SK-N-SH (cell line): ENCODE measurements at regions of chr2 and their contacts with region 1.

Region 1: GRCh38 chr2:127591221-127591923 is 54.6 kb upstream of the GPR17 start:
- DNase-seq: peak; percentile 82
- H3K4me3 ChIP-seq: no peak overlapping the region; a peak in 1 of 4 replicates
- H3K27ac ChIP-seq: no peak overlapping the region
- H3K4me1 ChIP-seq: no peaks in the 10 kb centered on the region
- H3K27me3 ChIP-seq: no peaks in the 10 kb centered on the region
- CTCF ChIP-seq: peak; percentile 74
- EP300 ChIP-seq: no peak
- RAD21 ChIP-seq: peak; percentile 89

Region 2: DNA sequence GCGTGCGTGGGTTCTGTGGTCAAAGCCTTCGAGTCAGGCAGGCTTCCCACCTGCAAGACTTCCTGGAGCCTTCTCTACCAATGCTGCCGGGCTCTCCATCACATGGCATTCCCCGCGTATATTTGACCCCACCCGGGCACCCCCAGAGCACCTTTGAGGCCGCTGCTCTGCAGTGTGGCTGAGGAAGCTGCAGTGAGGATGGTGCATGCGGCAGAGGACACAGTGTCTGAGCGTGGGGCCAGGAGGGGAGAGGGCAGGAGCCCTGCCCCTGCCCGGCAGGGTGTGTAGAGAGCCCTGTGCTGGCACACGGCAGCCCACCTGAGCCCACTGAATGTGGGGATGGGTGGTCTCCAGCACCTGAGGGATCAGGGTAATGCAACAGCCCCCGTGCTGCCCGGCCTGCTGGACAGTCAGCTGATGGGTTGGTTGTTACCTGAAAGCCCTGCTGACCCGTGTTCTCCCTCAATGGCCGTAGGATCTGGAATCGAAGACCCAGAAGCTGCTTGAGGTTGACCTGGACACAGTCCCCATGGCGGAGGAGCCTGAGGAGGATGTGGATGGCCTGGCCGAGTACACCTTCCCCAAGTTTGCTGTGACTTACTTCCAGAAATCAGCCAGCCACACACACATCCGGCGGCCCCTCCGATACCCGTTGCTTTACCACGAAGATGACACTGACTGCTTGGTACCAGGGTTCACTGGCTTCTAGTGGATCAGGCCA is 17.8 kb after region 1 on chr2:
- CTCF ChIA-PET with region 1: interaction called, 13 read pairs
- POLR2A ChIA-PET with region 1: no interaction called
- DNase-seq: no peak
- H3K4me3 ChIP-seq: no peak overlapping the region
- H3K27ac ChIP-seq: no peak overlapping the region
- H3K4me1 ChIP-seq: no peaks in the 10 kb centered on the region
- H3K27me3 ChIP-seq: no peaks in the 10 kb centered on the region
- CTCF ChIP-seq: no peak
- EP300 ChIP-seq: no peak
- RAD21 ChIP-seq: no peak

Region 3: DNA sequence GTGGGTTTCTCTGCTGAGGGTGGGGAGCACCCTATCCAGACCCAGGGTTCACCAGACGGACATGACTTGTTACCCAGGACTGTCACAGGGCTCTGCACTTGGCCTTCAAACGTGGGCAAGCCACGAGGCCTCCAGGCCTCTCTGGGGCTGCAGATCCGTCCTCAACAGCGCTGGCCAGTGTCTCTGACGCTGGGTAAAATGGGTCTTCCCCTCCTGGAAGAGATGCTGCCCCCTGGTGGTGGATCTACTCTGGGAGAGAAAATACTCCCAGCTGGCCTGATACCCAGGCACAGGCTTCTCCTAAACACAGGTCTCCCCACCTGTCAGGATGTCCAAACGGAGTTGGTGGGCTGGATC is 58.3 kb after region 1 on chr2:
- CTCF ChIA-PET with region 1: interaction called, 37 read pairs
- POLR2A ChIA-PET with region 1: no interaction called
- DNase-seq: peak; percentile 86
- H3K4me3 ChIP-seq: peak overlapping the region in 1 of 2 experiments; percentile 30; a peak in 1 of 4 replicates
- H3K27ac ChIP-seq: no peak overlapping the region; a peak in 1 of 4 replicates
- H3K4me1 ChIP-seq: peaks cover 0 to 50% of the 10 kb centered on the region in 2 experiments; a peak in 1 of 4 replicates
- H3K27me3 ChIP-seq: no peaks in the 10 kb centered on the region
- CTCF ChIP-seq: peak; percentile 84
- EP300 ChIP-seq: no peak
- RAD21 ChIP-seq: peak; percentile 69

Region 4: DNA sequence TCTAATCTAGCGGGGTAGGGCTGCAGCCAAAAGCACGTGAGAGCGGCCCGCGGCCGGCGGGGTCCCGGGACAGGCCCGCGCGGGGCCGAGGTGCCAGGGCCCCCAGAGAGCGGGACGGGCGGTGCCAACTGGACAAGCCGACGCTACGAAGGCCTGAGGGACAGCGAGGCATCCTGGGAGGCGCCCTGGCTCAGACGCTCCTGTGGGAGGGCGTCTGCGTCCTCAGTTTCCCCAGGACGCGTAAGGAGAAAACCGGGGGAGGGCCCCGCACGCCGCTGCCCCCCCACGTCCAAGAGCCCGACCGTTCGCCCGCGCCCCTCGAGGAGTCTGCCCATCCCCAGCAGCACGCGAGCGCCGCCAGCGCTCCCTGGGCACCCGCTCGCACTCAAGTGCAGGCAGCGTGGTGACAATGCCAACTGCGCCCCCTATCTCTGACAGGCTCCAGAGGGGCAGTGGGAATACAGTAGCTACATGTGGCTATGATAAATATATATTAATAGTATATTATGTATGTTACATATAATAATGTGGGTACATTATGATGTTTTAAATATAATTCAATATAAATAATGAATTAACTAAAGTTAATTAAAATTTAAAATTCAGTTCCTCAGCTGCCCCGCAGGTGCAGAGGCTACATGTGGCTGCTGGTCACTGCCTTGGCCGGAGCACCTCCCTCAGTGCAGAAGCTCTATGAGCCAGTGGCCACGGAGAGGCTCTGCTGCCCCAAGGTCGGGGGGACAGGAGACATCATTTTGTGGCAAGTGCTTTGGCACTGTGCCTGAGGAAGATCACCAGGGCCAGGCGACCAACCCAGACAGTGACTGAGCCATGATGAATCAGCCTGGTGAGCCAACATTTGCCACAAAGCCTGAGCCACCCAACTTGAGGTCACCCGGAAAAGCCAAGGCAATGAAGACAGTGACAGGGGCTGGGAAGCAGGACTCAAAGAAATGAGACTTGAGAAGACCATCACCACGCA is 104.4 kb after region 1 on chr2:
- CTCF ChIA-PET with region 1: interaction called, 22 read pairs
- POLR2A ChIA-PET with region 1: no interaction called
- DNase-seq: peak; percentile 90
- H3K4me3 ChIP-seq: peak overlapping the region in 1 of 2 experiments; percentile 36; a peak in 2 of 4 replicates
- H3K27ac ChIP-seq: no peak overlapping the region
- H3K4me1 ChIP-seq: peaks cover 0 to 11% of the 10 kb centered on the region in 2 experiments; a peak in 2 of 4 replicates
- H3K27me3 ChIP-seq: no peaks in the 10 kb centered on the region
- CTCF ChIP-seq: peak; percentile 46
- EP300 ChIP-seq: no peak
- RAD21 ChIP-seq: peak; percentile 76

Region 5: DNA sequence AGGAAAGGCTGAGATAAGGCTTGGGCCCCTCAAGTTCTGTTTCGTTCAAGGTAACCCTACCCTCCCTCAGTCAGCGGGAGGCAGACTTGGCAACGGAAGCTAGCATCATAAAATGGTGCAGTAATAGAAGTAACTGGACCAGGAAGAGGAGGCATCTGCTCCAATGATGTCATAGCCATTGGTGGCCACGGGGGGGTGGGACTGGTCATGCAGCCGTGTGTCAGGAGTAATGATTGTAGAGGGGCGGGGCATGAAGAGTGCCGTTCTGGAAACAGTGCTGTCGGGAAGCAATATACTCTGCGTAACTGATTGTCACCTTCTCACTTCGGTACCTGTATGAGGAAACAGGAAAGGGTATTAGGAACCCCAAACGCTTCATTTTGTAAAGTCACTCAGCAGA is 273.5 kb after region 1 on chr2:
- CTCF ChIA-PET with region 1: no interaction called
- POLR2A ChIA-PET with region 1: no interaction called
- DNase-seq: peak; percentile 70
- H3K4me3 ChIP-seq: no peak overlapping the region
- H3K27ac ChIP-seq: no peak overlapping the region
- H3K4me1 ChIP-seq: no peaks in the 10 kb centered on the region; a peak in 1 of 4 replicates
- H3K27me3 ChIP-seq: no peaks in the 10 kb centered on the region
- CTCF ChIP-seq: peak; percentile 23; the same call in 1 of the 2 replicates
- EP300 ChIP-seq: no peak
- RAD21 ChIP-seq: no peak